ENCODE measurements at regions of chr12 and their contacts with region 1.

Region 1: GRCh38 chr12:113208041-113208934 is 13.0 kb upstream of the TPCN1 start:
- DNase-seq: peak; percentile 94
- ATAC-seq: peak; percentile 85
- H3K4me3 Mint-ChIP-seq: peak overlapping the region; percentile 37
- H3K27ac Mint-ChIP-seq: peak overlapping the region; percentile 92
- H3K4me1 Mint-ChIP-seq: peaks cover 45% of the 10 kb centered on the region
- H3K27me3 Mint-ChIP-seq: no peaks in the 10 kb centered on the region
- CTCF ChIP-seq: no peak

Region 2: GRCh38 chr12:113221181-113221997 is 13.1 kb after region 1 on chr12 and contains the start of gene TPCN1:
- CTCF ChIA-PET with region 1: interaction called, 9 read pairs
- POLR2A ChIA-PET with region 1: interaction called, 21 read pairs
- intact Hi-C with region 1: loop called (anchors 2 kb)
- DNase-seq: peak; percentile 100
- ATAC-seq: peak; percentile 96
- H3K4me3 Mint-ChIP-seq: peak within 1 kb of the TSS; percentile 95
- H3K27ac Mint-ChIP-seq: peak within 1 kb of the TSS; percentile 88
- H3K4me1 Mint-ChIP-seq: peaks cover 35% of the 10 kb centered on the region
- H3K27me3 Mint-ChIP-seq: no peaks in the 10 kb centered on the region
- CTCF ChIP-seq: no peak
- total RNA-seq, gene TPCN1: 29.9 to 33.5 TPM

Region 3: GRCh38 chr12:113232840-113233585 is 24.7 kb after region 1 on chr12:
- CTCF ChIA-PET with region 1: interaction called, 4 read pairs
- POLR2A ChIA-PET with region 1: interaction called, 18 read pairs
- intact Hi-C with region 1: no loop called
- DNase-seq: peak; percentile 83
- ATAC-seq: peak; percentile 88
- H3K4me3 Mint-ChIP-seq: peak overlapping the region; percentile 59
- H3K27ac Mint-ChIP-seq: peak overlapping the region; percentile 80
- H3K4me1 Mint-ChIP-seq: peaks cover 44% of the 10 kb centered on the region
- H3K27me3 Mint-ChIP-seq: no peaks in the 10 kb centered on the region
- CTCF ChIP-seq: peak; percentile 33

Region 4: DNA sequence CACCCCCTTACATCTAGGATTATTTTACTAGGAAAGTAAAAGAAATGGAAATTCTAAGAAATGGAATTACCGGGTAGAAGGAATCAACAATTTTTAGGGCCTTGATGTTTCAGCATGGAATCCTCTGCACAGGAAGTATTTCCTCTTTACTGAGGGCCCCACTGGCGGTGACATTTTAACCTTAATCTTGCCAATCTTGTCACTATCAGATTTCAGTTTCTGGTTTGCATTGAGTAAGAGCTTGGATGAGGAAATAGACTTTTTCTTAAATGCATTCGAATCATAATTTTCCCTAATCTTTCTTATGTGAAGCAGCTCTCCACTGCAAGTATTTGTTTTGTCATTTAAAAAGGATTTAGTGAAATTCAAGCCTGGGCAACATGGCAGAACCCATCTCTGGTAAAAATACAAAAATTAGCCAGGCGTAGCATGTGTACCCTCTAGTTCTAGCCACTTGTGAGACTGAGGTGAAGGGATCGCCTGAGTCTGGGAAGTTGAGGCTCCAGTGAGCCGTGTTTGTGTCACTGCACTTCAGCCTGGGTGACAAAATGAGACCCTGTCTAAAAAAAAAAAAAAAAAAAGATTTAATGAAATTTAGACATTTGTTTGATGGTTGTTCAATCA is 53.7 kb after region 1 on chr12:
- CTCF ChIA-PET with region 1: no interaction called
- POLR2A ChIA-PET with region 1: no interaction called
- intact Hi-C with region 1: loop called (anchors 5 kb)
- DNase-seq: peak; percentile 74
- ATAC-seq: peak; percentile 91
- H3K4me3 Mint-ChIP-seq: peak overlapping the region; percentile 36
- H3K27ac Mint-ChIP-seq: peak overlapping the region; percentile 77
- H3K4me1 Mint-ChIP-seq: peaks cover 36% of the 10 kb centered on the region
- H3K27me3 Mint-ChIP-seq: no peaks in the 10 kb centered on the region
- CTCF ChIP-seq: no peak

Measured in activated CD8-positive, alpha-beta T cell treated with anti-CD3 and anti-CD28 coated beads for 36 hours (primary cell).